ENCODE measurements at regions of chr6 and their contacts with region 1.

Region 1: DNA sequence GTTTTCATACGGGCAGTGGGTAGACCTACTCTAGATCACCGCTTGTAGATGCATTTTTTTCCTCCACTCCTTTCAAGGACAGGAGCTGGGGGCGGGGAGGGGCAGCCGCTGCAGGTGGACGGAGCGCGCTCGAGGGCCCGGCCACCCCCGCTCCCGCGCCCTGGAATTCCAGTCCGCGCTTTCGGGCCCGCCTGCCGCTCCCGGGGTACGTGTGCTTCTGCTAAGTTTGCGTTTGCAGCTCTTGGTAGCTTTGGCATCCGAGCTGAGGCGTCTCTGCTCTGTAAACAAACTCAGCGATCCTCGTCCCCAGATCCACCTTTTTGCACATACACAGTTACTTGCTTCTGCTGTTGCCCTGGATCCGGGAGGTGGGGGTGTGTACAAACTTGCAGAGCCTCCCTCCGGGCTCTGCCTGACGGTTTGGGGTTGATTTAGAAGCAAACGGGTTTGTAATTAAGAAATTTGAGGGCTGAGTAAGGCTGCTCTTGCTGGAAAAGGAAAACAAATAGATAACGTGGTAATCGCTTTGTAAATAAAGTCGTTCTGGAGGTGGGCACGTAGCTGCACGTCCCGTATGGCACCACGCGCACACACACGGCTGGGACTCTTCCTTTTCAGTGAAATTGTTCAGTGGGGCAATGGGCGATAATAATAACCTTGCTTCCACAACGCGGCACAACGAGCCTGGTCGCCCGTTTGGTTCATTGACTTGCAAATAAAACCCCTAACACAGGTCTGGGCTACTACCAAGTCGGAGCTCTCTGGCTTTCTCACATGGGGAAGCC is 976 bp upstream of the CITED2 start:
- DNase-seq: peak; percentile 72 to 92 (median 80)
- ATAC-seq: peak; percentile 65
- H3K4me3 ChIP-seq: peak overlapping the region; percentile 71
- H3K4me3 Mint-ChIP-seq: peak overlapping the region; percentile 95
- H3K27ac ChIP-seq: peak overlapping the region; percentile 69 to 92
- H3K27ac Mint-ChIP-seq: peak overlapping the region; percentile 97
- H3K4me1 ChIP-seq: peaks cover 16% of the 10 kb centered on the region
- H3K4me1 Mint-ChIP-seq: peaks cover 28% of the 10 kb centered on the region
- H3K27me3 ChIP-seq: no peaks in the 10 kb centered on the region
- H3K27me3 Mint-ChIP-seq: no peaks in the 10 kb centered on the region
- CTCF ChIP-seq: no peak

Region 2: DNA sequence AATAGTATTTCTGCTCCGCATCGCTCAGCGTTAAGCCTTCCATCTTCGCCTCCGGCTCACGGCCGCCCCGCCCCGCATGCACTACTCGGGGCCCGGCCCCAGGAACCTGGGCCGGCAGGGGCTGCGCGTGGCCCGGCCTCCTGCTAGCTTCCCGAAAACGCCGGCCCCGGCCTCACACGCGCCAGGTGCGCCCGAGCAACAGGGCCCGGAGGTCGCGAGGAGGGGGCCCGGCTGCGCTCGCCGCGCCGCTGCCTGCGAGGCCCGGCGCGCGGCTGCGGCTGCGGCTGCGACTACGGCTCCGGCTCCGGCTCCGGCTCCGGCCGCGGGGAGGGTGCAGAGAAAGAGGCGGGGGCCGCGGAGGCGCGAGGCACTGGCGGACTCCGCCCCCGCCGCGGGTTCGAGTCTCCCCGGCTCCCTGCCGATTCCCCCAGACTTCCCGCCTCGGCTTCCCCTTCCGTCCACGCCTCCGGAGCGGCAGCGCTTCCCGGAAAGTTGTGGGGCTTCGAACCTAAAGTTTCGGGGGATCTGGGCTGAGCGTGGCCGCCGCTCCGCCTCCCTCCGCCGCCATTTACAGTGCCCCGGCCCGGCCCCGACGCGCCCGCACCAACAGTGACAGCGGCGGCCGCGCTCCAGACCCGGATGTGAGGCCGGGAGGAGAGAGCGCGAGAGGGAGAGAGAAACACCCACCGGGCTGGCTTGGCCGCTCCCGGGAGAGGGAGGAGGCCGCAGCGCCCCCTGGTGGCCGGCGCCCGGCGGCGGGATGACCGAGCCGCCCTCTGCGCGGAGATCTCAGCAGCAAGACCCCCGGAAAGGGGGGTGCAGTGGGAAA is 387.6 kb before region 1 on chr6 and contains the start of gene REPS1:
- CTCF ChIA-PET with region 1: no interaction called
- POLR2A ChIA-PET with region 1: interaction called, 40 read pairs
- intact Hi-C with region 1: loop called (anchors 5 kb)
- DNase-seq: peak; percentile 81 to 94 (median 88)
- ATAC-seq: peak; percentile 82
- H3K4me3 ChIP-seq: peak within 1 kb of the TSS; percentile 77
- H3K4me3 Mint-ChIP-seq: peak within 1 kb of the TSS; percentile 90
- H3K27ac ChIP-seq: peak within 1 kb of the TSS; percentile 53 to 54
- H3K27ac Mint-ChIP-seq: peak within 1 kb of the TSS; percentile 89
- H3K4me1 ChIP-seq: peaks cover 36% of the 10 kb centered on the region
- H3K4me1 Mint-ChIP-seq: peaks cover 8% of the 10 kb centered on the region
- H3K27me3 ChIP-seq: no peaks in the 10 kb centered on the region
- H3K27me3 Mint-ChIP-seq: no peaks in the 10 kb centered on the region
- CTCF ChIP-seq: peak; percentile 99
- total RNA-seq, gene REPS1: 54.0 to 56.6 TPM

Region 3: DNA sequence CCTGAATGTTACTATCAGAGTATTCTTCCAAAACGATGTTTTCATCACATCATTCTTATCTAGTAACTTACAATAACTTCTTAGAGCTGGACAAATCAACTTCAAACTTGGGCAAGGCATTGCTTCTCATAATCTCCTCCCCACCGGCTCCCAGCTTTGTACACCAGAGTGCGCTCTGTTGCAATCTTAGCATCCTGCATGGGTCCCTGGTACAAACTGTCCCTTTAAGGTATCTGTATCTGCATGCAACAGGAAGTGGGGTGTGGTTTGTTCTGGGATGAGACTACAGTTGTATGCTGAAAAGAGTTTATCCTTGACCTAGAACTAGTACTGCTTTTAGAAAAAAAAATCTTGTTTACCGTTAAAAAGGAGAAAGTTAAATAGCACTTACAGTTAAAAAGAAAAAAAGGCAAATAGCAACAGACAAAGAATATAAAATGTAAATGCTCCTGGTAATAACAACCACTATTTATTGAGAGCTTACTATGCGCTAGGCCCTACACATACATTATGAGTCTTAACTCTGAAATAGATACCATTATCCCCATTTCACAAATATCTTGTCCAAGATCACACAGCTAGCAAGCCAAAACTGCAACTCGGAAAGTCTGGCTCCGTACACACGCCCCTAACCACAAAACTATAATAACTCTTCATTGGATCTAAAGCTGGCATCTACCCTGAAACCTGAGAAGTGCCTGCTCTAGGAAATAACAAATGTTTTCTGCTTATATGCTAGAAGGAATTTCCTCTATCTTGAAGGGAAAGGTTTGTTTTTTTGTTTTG is 250.3 kb before region 1 on chr6:
- CTCF ChIA-PET with region 1: interaction called, 12 read pairs
- POLR2A ChIA-PET with region 1: interaction called, 31 read pairs
- intact Hi-C with region 1: loop called in 1 of 2 experiments (anchors 2 kb)
- DNase-seq: peak; percentile 60 to 95 (median 76)
- ATAC-seq: peak; percentile 98
- H3K4me3 ChIP-seq: peak overlapping the region; percentile 1
- H3K4me3 Mint-ChIP-seq: peak overlapping the region; percentile 66
- H3K27ac ChIP-seq: peak overlapping the region; percentile 64 to 66
- H3K27ac Mint-ChIP-seq: peak overlapping the region; percentile 88
- H3K4me1 ChIP-seq: peaks cover 40% of the 10 kb centered on the region
- H3K4me1 Mint-ChIP-seq: peaks cover 57% of the 10 kb centered on the region
- H3K27me3 ChIP-seq: no peaks in the 10 kb centered on the region
- H3K27me3 Mint-ChIP-seq: no peaks in the 10 kb centered on the region
- CTCF ChIP-seq: peak; percentile 80

Region 4: GRCh38 chr6:139173172-139173571 is 202.3 kb before region 1 on chr6:
- CTCF ChIA-PET with region 1: no interaction called
- POLR2A ChIA-PET with region 1: interaction called, 12 read pairs
- intact Hi-C with region 1: no loop called
- DNase-seq: peak in 4 of 14 experiments; percentile 42 to 70 (median 54)
- ATAC-seq: peak; percentile 71
- H3K4me3 ChIP-seq: no peak overlapping the region
- H3K4me3 Mint-ChIP-seq: peak overlapping the region; percentile 40
- H3K27ac ChIP-seq: peak overlapping the region; percentile 31 to 49
- H3K27ac Mint-ChIP-seq: peak overlapping the region; percentile 48
- H3K4me1 ChIP-seq: peaks cover 69% of the 10 kb centered on the region
- H3K4me1 Mint-ChIP-seq: peaks cover 95% of the 10 kb centered on the region
- H3K27me3 ChIP-seq: no peaks in the 10 kb centered on the region
- H3K27me3 Mint-ChIP-seq: no peaks in the 10 kb centered on the region
- CTCF ChIP-seq: peak; percentile 39

Region 5: DNA sequence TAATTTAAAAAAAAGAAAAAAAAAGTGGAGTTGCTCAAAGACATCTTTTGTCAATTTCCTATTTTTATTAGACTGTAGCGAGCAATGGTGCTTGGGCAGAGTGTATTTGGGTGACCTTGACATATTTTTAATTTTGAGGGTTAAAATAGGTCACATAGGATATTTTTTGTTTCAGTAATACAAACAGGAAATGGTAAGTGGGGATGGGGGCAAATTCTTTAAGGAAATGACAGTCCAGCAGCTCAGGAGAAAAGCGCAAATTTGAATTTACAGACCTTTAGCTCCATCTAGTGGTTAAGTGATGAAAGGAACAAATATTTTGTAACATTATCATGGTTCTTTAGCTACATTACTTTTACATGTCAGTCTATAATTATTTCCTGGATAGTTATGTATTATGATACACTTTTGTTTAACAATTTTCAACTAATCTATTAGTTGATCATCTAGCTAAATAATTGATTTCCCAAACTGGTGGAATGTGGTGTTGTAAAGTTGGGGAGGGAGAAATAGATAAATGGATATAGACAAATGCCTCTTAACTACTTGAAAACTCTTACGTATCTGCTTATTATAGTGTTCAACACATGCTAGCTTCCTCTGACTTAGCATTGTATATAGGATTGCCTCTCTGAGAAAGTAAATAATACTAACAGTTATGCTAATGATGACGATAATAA is 11.0 kb before region 1 on chr6:
- CTCF ChIA-PET with region 1: interaction called, 6 read pairs
- POLR2A ChIA-PET with region 1: interaction called, 33 read pairs
- intact Hi-C with region 1: no loop called
- DNase-seq: peak in 3 of 14 experiments; percentile 72 to 75 (median 72)
- ATAC-seq: peak; percentile 59
- H3K4me3 ChIP-seq: no peak overlapping the region
- H3K4me3 Mint-ChIP-seq: no peak overlapping the region
- H3K27ac ChIP-seq: no peak overlapping the region
- H3K27ac Mint-ChIP-seq: no peak overlapping the region
- H3K4me1 ChIP-seq: peaks cover 9% of the 10 kb centered on the region
- H3K4me1 Mint-ChIP-seq: peaks cover 58% of the 10 kb centered on the region
- H3K27me3 ChIP-seq: no peaks in the 10 kb centered on the region
- H3K27me3 Mint-ChIP-seq: no peaks in the 10 kb centered on the region
- CTCF ChIP-seq: peak; percentile 91

Region 6: DNA sequence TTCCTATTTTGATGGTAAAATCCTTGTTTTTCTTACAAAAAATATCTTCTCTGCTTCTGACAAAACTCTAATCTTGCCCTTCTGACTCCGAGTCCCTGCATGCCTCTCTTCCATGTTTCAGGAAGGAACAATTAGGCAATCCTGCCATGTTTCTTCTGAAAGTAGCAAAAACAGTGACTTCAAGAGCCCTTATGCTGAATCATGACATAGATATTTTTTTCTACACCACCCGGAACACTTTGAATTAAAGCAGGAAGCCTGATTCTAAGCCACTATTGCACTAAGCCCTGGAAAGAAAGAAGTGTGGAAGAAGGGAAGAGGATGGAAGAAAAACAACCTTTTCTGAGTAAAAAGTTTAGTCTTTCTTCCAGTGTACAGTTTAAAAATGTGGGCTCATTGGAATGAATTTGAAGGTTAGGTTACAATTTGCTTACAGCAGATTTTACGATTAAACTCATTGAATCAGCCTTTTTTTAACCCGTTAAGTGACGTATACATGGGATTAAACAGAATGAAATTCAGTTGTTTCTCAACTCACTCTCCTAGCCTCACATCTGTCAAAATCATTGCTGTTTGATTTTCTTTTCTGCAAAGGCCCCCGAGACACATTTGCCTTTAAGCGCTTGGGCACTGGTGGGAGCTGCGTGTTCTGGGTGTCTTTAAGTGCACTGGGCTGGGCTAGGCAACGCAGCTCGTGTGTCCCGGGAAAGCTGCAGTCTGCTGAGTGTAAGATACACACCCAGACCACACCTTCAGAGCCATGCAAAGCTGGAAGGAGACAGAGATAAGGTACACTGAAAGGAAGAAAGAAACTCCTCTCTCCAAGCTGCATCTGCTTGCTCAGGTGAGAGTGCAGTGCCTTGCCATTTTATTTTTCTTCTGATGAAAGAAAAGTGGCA is 158.4 kb after region 1 on chr6:
- CTCF ChIA-PET with region 1: interaction called, 3 read pairs
- POLR2A ChIA-PET with region 1: interaction called, 25 read pairs
- intact Hi-C with region 1: loop called in 1 of 2 experiments (anchors 5 kb)
- DNase-seq: peak in 2 of 14 experiments; percentile 13 to 41
- ATAC-seq: no peak
- H3K4me3 ChIP-seq: no peak overlapping the region
- H3K4me3 Mint-ChIP-seq: peak overlapping the region; percentile 32
- H3K27ac ChIP-seq: peak overlapping the region; percentile 18 to 50
- H3K27ac Mint-ChIP-seq: peak overlapping the region; percentile 76
- H3K4me1 ChIP-seq: peaks cover 41% of the 10 kb centered on the region
- H3K4me1 Mint-ChIP-seq: peaks cover 53% of the 10 kb centered on the region
- H3K27me3 ChIP-seq: no peaks in the 10 kb centered on the region
- H3K27me3 Mint-ChIP-seq: no peaks in the 10 kb centered on the region
- CTCF ChIP-seq: no peak

Measured in CD4-positive, alpha-beta T cell (primary cell).